ENCODE measurements at regions of chr6 and their contacts with region 1.

Region 1: GRCh38 chr6:36594029-36594815 is at the start of gene SRSF3:
- DNase-seq: peak; percentile 97
- H3K4me3 ChIP-seq: peak within 1 kb of the TSS; percentile 52 to 92 (median 80)
- H3K27ac ChIP-seq: peak within 1 kb of the TSS; percentile 96 to 100 (median 98)
- H3K4me1 ChIP-seq: peaks cover 21 to 40% (median 30%) of the 10 kb centered on the region in 4 donors
- H3K27me3 ChIP-seq: no peaks in the 10 kb centered on the region
- CTCF ChIP-seq: peak; percentile 37 to 77 (median 49)
- EP300 ChIP-seq: no peak
- POLR2A ChIP-seq: peak; percentile 100
- total RNA-seq, gene SRSF3: 110 to 177 (median 144) TPM

Region 2: GRCh38 chr6:36442671-36443470 is 151.4 kb before region 1 on chr6 and contains the starts of genes KCTD20 and PXT1:
- in situ Hi-C with region 1: loop called in 2 of 4 experiments (anchors 10 to 25 kb)
- intact Hi-C with region 1: no loop called
- DNase-seq: peak; percentile 91
- H3K4me3 ChIP-seq: peak within 1 kb of the TSS; percentile 63 to 89 (median 73)
- H3K27ac ChIP-seq: peak within 1 kb of the TSS; percentile 91 to 98 (median 96)
- H3K4me1 ChIP-seq: peaks cover 21 to 40% (median 31%) of the 10 kb centered on the region in 4 donors
- H3K27me3 ChIP-seq: no peaks in the 10 kb centered on the region
- CTCF ChIP-seq: no peak
- EP300 ChIP-seq: no peak
- POLR2A ChIP-seq: peak; percentile 69
- total RNA-seq, gene KCTD20: 23.2 to 61.9 (median 29.9) TPM
- total RNA-seq, gene PXT1: 0.14 TPM in 1 of 4 donors, not detected in the others

Region 3: GRCh38 chr6:36701401-36701991 is 107.3 kb after region 1 on chr6:
- in situ Hi-C with region 1: no loop called
- intact Hi-C with region 1: no loop called
- DNase-seq: no peak
- H3K4me3 ChIP-seq: no peak overlapping the region
- H3K27ac ChIP-seq: no peak overlapping the region
- H3K4me1 ChIP-seq: no peaks in the 10 kb centered on the region
- H3K27me3 ChIP-seq: no peaks in the 10 kb centered on the region
- CTCF ChIP-seq: peak in 1 of 5 experiments; percentile 4
- EP300 ChIP-seq: no peak
- POLR2A ChIP-seq: no peak

Measured in transverse colon (tissue), 4 donors.